ENCODE measurements at regions of chr2 and their contacts with region 1.

Region 1: GRCh38 chr2:74147727-74148456 is at the start of gene BOLA3:
- DNase-seq: peak; percentile 58 to 90 (median 82)
- ATAC-seq: peak; percentile 90
- H3K4me3 ChIP-seq: peak within 1 kb of the TSS; percentile 51 to 73
- H3K4me3 Mint-ChIP-seq: no peak within 1 kb of the TSS
- H3K27ac ChIP-seq: peak within 1 kb of the TSS; percentile 21 to 66
- H3K27ac Mint-ChIP-seq: no peak within 1 kb of the TSS
- H3K4me1 ChIP-seq: peaks cover 12% of the 10 kb centered on the region
- H3K4me1 Mint-ChIP-seq: peaks cover 4% of the 10 kb centered on the region
- H3K27me3 ChIP-seq: no peaks in the 10 kb centered on the region
- H3K27me3 Mint-ChIP-seq: no peaks in the 10 kb centered on the region
- CTCF ChIP-seq: peak; percentile 66
- total RNA-seq, gene BOLA3: 9.9 to 10.1 TPM

Region 2: DNA sequence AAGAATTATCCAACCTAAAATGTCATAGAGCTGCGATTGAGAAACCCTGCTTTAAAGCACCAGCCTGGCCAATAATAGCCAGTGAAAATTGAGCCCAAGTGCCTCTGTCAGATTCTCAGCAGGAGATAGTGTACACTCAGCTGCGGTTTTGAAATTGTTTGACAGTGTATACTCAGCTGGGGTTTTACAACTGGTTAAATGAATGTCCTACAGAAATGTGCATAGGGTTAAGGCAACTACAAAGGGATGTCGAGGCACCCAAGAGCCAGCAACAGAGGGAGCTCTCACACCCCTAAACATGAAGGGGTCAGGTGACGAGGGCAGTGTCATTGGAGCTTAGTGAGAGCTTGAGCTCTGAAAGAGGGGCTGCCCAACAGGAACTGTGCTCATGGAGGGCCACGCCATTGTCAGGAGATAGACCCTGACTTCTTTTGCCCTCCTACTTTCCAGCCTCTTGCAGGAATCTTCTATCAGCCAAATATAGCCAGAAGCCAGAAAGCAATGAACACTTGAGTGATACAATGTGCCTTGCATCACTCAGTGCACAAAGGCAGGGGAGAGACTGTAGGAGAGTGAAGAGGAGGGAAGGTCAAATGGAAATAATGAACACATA is 239.9 kb before region 1 on chr2:
- CTCF ChIA-PET with region 1: interaction called, 6 read pairs
- POLR2A ChIA-PET with region 1: interaction called, 4 read pairs
- intact Hi-C with region 1: loop called (anchors 1 to 2 kb)
- DNase-seq: peak; percentile 19 to 79 (median 61)
- ATAC-seq: peak; percentile 90
- H3K4me3 ChIP-seq: no peak overlapping the region
- H3K4me3 Mint-ChIP-seq: no peak overlapping the region
- H3K27ac ChIP-seq: no peak overlapping the region
- H3K27ac Mint-ChIP-seq: peak overlapping the region; percentile 7
- H3K4me1 ChIP-seq: no peaks in the 10 kb centered on the region
- H3K4me1 Mint-ChIP-seq: peaks cover 3% of the 10 kb centered on the region
- H3K27me3 ChIP-seq: no peaks in the 10 kb centered on the region
- H3K27me3 Mint-ChIP-seq: no peaks in the 10 kb centered on the region
- CTCF ChIP-seq: peak; percentile 44

Region 3: GRCh38 chr2:74002487-74003391 is 145.2 kb before region 1 on chr2:
- CTCF ChIA-PET with region 1: interaction called, 6 read pairs
- POLR2A ChIA-PET with region 1: no interaction called
- intact Hi-C with region 1: loop called in 1 of 2 experiments (anchors 1 kb)
- DNase-seq: peak; percentile 54 to 91 (median 79)
- ATAC-seq: peak; percentile 94
- H3K4me3 ChIP-seq: peak overlapping the region; percentile 50 to 52
- H3K4me3 Mint-ChIP-seq: peak overlapping the region; percentile 88
- H3K27ac ChIP-seq: peak overlapping the region in 1 of 2 experiments; percentile 66
- H3K27ac Mint-ChIP-seq: peak overlapping the region; percentile 69
- H3K4me1 ChIP-seq: peaks cover 36% of the 10 kb centered on the region
- H3K4me1 Mint-ChIP-seq: peaks cover 76% of the 10 kb centered on the region
- H3K27me3 ChIP-seq: no peaks in the 10 kb centered on the region
- H3K27me3 Mint-ChIP-seq: no peaks in the 10 kb centered on the region
- CTCF ChIP-seq: no peak

Region 4: GRCh38 chr2:74119912-74120825 is 27.7 kb before region 1 on chr2:
- CTCF ChIA-PET with region 1: interaction called, 12 read pairs
- POLR2A ChIA-PET with region 1: interaction called, 5 read pairs
- intact Hi-C with region 1: loop called (anchors 1 kb)
- DNase-seq: peak; percentile 76 to 92 (median 83)
- ATAC-seq: peak; percentile 97
- H3K4me3 ChIP-seq: peak overlapping the region; percentile 94 to 96
- H3K4me3 Mint-ChIP-seq: peak overlapping the region; percentile 84
- H3K27ac ChIP-seq: peak overlapping the region; percentile 82 to 95
- H3K27ac Mint-ChIP-seq: peak overlapping the region; percentile 92
- H3K4me1 ChIP-seq: peaks cover 8% of the 10 kb centered on the region
- H3K4me1 Mint-ChIP-seq: peaks cover 7% of the 10 kb centered on the region
- H3K27me3 ChIP-seq: peaks cover 0 to 4% of the 10 kb centered on the region in 2 experiments
- H3K27me3 Mint-ChIP-seq: peaks cover 4% of the 10 kb centered on the region
- CTCF ChIP-seq: peak; percentile 47

Region 5: DNA sequence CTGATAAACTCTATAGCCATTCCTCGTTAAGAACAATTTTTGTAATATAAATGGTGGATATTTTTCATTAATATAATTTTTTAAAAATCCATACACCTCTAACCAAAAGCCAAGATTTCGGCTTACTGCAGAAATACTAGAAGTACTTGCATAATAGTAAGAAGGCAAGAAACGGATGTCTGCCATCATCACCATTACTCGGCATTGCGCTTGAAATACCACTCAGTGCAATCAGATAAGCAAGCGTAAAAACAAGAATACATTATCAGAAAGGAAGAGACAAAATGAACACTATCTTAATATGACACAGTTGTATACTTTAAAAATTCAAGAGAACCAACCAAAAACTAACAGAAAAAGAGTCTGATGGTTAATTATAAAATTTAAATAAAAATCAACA is 15.1 kb after region 1 on chr2:
- CTCF ChIA-PET with region 1: interaction called, 14 read pairs
- POLR2A ChIA-PET with region 1: interaction called, 6 read pairs
- intact Hi-C with region 1: no loop called
- DNase-seq: no peak
- ATAC-seq: no peak
- H3K4me3 ChIP-seq: no peak overlapping the region
- H3K4me3 Mint-ChIP-seq: no peak overlapping the region
- H3K27ac ChIP-seq: no peak overlapping the region
- H3K27ac Mint-ChIP-seq: no peak overlapping the region
- H3K4me1 ChIP-seq: no peaks in the 10 kb centered on the region
- H3K4me1 Mint-ChIP-seq: peaks cover 12% of the 10 kb centered on the region
- H3K27me3 ChIP-seq: no peaks in the 10 kb centered on the region
- H3K27me3 Mint-ChIP-seq: no peaks in the 10 kb centered on the region
- CTCF ChIP-seq: no peak

Measured in CD8-positive, alpha-beta T cell (primary cell).